ENCODE measurements at regions of chrX and their contacts with region 1.

Region 1: GRCh38 chrX:142549923-142550322 is 344.8 kb upstream of the MAGEC2 start:
- DNase-seq: no peak
- H3K4me3 ChIP-seq: no peak overlapping the region
- H3K27ac ChIP-seq: no peak overlapping the region
- H3K4me1 ChIP-seq: no peaks in the 10 kb centered on the region
- H3K27me3 ChIP-seq: no peaks in the 10 kb centered on the region
- CTCF ChIP-seq: no peak
- POLR2A ChIP-seq: no peak

Region 2: DNA sequence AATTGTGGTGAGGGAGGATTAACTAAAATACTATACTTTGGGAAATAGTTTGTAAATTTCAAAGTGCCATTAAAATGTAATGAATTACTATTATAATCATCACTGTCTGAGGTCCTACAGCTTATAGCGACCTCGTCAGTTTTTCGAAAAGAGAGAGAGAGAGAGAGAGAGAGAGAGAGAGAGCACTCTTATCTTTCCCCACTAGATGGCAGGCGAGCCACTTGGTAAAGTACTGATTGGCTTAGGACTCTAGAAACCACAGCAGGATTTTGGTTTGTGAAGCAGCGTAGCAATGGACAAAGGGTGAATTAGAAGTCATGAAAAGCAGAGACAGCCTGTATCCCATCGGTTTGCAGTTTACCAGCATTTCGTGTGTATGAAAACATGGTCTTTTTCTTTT is 1787.9 kb before region 1 on chrX:
- intact Hi-C with region 1: loop called (anchors 10 kb)
- DNase-seq: no peak
- H3K4me3 ChIP-seq: no peak overlapping the region
- H3K27ac ChIP-seq: no peak overlapping the region
- H3K4me1 ChIP-seq: no peaks in the 10 kb centered on the region
- H3K27me3 ChIP-seq: peaks cover 0 to 29% of the 10 kb centered on the region in 2 donors
- CTCF ChIP-seq: peak; percentile 14 to 51 (median 48)
- POLR2A ChIP-seq: no peak

Region 3: GRCh38 chrX:142601792-142602191 is 51.9 kb after region 1 on chrX:
- intact Hi-C with region 1: no loop called
- DNase-seq: no peak
- H3K4me3 ChIP-seq: no peak overlapping the region
- H3K27ac ChIP-seq: no peak overlapping the region
- H3K4me1 ChIP-seq: no peaks in the 10 kb centered on the region
- H3K27me3 ChIP-seq: peaks cover 0 to 3% of the 10 kb centered on the region in 2 donors
- CTCF ChIP-seq: no peak
- POLR2A ChIP-seq: no peak

Measured in breast epithelium (tissue), 4 donors.